ENCODE measurements at regions of chr1 and their contacts with region 1.

Region 1: DNA sequence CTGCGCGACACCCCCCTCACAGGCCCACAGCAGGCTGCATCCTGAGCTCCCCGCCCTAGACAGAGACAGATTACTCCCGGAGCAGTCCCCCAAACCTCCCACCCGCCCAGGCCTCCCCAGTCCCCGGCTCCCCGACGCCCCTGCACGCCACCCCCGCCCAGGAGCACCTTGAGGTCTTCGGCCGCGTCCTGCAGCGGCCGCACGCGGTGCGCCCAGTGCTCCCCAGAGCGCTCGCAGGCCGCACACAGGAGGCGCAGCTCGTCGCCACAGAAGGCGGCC is 709 bp downstream of the TRIM11 start:
- DNase-seq: peak; percentile 40
- H3K4me3 Mint-ChIP-seq: peak overlapping the region; percentile 95
- H3K27ac Mint-ChIP-seq: peak overlapping the region; percentile 93
- H3K4me1 Mint-ChIP-seq: peaks cover 55% of the 10 kb centered on the region
- H3K27me3 Mint-ChIP-seq: no peaks in the 10 kb centered on the region
- CTCF ChIP-seq: no peak

Region 2: GRCh38 chr1:228212966-228213844 is 192.7 kb before region 1 on chr1:
- CTCF ChIA-PET with region 1: interaction called, 3 read pairs
- POLR2A ChIA-PET with region 1: interaction called, 14 read pairs
- intact Hi-C with region 1: loop called (anchors 5 kb)
- DNase-seq: peak; percentile 92
- H3K4me3 Mint-ChIP-seq: peak overlapping the region; percentile 88
- H3K27ac Mint-ChIP-seq: peak overlapping the region; percentile 74
- H3K4me1 Mint-ChIP-seq: peaks cover 8% of the 10 kb centered on the region
- H3K27me3 Mint-ChIP-seq: no peaks in the 10 kb centered on the region
- CTCF ChIP-seq: peak; percentile 69

Region 3: DNA sequence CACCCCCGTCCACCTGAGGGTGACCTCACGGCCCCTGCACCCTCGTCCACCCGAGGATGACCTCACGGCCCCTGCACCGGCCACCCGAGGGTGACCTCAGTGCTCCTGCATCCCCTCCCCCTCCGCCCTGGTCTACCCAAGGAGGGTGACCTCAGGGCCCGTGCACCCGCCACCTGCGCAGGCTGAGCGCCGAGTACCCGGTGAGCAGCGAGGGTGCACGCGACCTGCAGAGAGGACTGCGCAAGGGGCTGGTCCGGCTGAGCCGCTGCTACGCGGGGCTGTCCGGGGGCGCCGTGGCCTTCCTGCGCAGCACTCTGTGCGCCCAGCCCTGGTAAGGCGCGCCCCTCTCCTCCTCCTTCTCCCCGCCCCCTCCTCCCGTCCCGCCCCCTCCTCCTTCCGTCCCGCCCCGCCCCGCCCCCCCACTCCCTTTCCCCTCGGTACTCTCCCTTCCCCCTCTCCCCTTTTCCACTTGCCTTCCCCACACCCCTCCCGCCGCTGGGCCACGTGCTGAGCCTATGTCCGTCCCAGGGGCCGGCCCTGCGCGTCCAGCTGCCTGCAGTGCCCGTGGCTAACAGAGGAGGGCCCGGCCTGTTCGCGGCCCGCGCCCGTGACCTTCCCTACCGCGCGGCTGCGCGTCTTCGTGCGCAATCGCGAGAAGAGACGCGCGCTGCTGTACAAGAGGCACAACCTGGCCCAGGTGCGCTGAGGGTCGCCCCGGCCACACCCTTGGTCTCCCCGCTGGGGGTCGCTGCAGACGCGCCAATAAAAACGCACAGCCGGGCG is 27.6 kb before region 1 on chr1:
- CTCF ChIA-PET with region 1: interaction called, 6 read pairs
- POLR2A ChIA-PET with region 1: interaction called, 19 read pairs
- intact Hi-C with region 1: no loop called
- DNase-seq: peak; percentile 88
- H3K4me3 Mint-ChIP-seq: peak overlapping the region; percentile 95
- H3K27ac Mint-ChIP-seq: peak overlapping the region; percentile 84
- H3K4me1 Mint-ChIP-seq: peaks cover 21% of the 10 kb centered on the region
- H3K27me3 Mint-ChIP-seq: no peaks in the 10 kb centered on the region
- CTCF ChIP-seq: peak; percentile 91

Region 4: GRCh38 chr1:228393248-228393699 is 12.7 kb before region 1 on chr1:
- CTCF ChIA-PET with region 1: interaction called, 25 read pairs
- POLR2A ChIA-PET with region 1: interaction called, 41 read pairs
- intact Hi-C with region 1: no loop called
- DNase-seq: peak; percentile 82
- H3K4me3 Mint-ChIP-seq: no peak overlapping the region
- H3K27ac Mint-ChIP-seq: peak overlapping the region; percentile 75
- H3K4me1 Mint-ChIP-seq: peaks cover 17% of the 10 kb centered on the region
- H3K27me3 Mint-ChIP-seq: no peaks in the 10 kb centered on the region
- CTCF ChIP-seq: peak; percentile 64

Region 5: GRCh38 chr1:228486596-228487335 is 80.8 kb after region 1 on chr1:
- CTCF ChIA-PET with region 1: interaction called, 9 read pairs
- POLR2A ChIA-PET with region 1: interaction called, 26 read pairs
- intact Hi-C with region 1: no loop called
- DNase-seq: peak; percentile 93
- H3K4me3 Mint-ChIP-seq: peak overlapping the region; percentile 90
- H3K27ac Mint-ChIP-seq: peak overlapping the region; percentile 100
- H3K4me1 Mint-ChIP-seq: peaks cover 40% of the 10 kb centered on the region
- H3K27me3 Mint-ChIP-seq: peaks cover 14% of the 10 kb centered on the region
- CTCF ChIP-seq: no peak